AG04450 (cell line): ENCODE measurements at regions of chr9 and their contacts with region 1.

Region 1: GRCh38 chr9:27548055-27548741 is 18.6 kb upstream of the MOB3B start:
- DNase-seq: no peak
- H3K4me3 ChIP-seq: no peak overlapping the region
- H3K27ac ChIP-seq: no peak overlapping the region
- H3K27me3 ChIP-seq: no peaks in the 10 kb centered on the region
- CTCF ChIP-seq: peak; percentile 57

Region 2: GRCh38 chr9:26744191-26744965 is 803.8 kb before region 1 on chr9:
- CTCF ChIA-PET with region 1: interaction called, 11 read pairs
- POLR2A ChIA-PET with region 1: no interaction called
- DNase-seq: no peak
- H3K4me3 ChIP-seq: no peak overlapping the region
- H3K27ac ChIP-seq: no peak overlapping the region
- H3K27me3 ChIP-seq: no peaks in the 10 kb centered on the region
- CTCF ChIP-seq: peak; percentile 64

Region 3: DNA sequence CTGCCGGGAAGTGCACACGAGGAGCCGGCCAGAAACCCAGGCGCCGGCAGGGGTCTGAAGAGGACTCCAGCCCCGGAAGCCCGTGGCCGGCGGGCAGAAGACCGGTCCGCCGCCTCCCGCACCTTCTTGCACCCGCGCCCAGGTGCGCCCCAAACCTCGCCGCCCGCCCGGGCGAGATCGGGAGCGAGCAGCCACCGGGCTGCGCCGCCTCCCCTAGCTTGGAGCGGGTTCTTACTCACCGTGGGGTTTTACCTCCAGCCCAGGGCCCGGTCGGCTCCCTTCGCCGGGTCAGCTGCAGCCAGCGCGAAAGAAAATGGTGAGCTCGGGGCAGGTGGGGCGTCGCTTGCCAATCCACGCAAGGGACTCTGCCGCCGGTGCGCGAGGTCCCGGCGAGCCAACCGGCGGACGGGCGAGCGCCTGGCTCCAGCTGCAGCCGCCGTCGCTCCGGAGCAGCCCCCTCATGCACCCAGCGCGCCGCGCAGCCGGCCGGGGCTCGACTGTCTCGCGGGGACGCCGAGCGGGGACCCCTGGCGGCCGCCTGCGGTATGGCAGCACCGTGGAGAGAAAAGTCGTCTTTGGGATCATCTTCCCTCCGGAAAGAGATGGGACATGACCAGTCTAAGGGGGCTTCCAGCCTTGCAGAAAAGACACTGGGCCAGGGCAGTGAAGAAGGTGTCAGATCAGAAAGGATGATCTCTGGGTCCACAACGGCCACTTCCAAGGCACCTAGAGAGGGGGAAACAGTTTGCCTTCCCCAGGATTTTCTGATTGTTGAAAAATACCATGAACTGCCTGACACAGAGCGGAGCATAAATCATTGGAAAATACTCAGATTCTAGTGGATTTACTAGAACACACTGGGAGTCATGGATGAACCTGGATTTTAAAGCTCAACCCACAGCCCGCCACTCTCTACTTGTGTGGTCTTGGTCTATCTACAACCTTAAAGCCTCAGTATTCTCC is 18.6 kb before region 1 on chr9 and contains the start of gene MOB3B:
- CTCF ChIA-PET with region 1: interaction called, 30 read pairs
- POLR2A ChIA-PET with region 1: no interaction called
- DNase-seq: peak; percentile 16
- H3K4me3 ChIP-seq: peak within 1 kb of the TSS; percentile 64
- H3K27ac ChIP-seq: no peak within 1 kb of the TSS
- H3K27me3 ChIP-seq: peaks cover 33% of the 10 kb centered on the region
- CTCF ChIP-seq: peak; percentile 78
- polyA plus RNA-seq, gene MOB3B: 0.32 and 0.38 TPM in 2 replicates

Region 4: DNA sequence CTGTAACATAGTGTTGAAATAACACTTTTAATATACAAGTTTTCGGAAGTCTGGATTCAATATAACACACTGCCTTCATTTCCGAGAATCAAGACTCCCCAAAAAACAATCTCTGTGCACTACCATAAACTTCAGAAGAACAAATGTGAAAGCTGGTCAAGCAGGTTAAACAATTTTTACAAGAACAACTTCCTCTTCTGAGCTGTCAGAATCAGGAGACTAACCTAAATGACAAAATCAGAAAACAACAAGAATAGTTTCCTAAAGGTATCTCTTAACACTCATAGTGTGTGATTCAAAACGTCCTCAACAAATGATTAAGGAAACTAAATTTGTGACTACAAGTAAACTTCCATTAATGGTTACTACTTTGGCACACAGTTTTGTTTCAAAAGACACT is 13.5 kb after region 1 on chr9:
- CTCF ChIA-PET with region 1: interaction called, 13 read pairs
- POLR2A ChIA-PET with region 1: no interaction called
- DNase-seq: no peak
- H3K4me3 ChIP-seq: no peak overlapping the region
- H3K27ac ChIP-seq: no peak overlapping the region
- H3K27me3 ChIP-seq: no peaks in the 10 kb centered on the region
- CTCF ChIP-seq: no peak